Right ventricle myocardium inferior (tissue), 1 donor: ENCODE measurements at regions of chr2 and their contacts with region 1.

Region 1: DNA sequence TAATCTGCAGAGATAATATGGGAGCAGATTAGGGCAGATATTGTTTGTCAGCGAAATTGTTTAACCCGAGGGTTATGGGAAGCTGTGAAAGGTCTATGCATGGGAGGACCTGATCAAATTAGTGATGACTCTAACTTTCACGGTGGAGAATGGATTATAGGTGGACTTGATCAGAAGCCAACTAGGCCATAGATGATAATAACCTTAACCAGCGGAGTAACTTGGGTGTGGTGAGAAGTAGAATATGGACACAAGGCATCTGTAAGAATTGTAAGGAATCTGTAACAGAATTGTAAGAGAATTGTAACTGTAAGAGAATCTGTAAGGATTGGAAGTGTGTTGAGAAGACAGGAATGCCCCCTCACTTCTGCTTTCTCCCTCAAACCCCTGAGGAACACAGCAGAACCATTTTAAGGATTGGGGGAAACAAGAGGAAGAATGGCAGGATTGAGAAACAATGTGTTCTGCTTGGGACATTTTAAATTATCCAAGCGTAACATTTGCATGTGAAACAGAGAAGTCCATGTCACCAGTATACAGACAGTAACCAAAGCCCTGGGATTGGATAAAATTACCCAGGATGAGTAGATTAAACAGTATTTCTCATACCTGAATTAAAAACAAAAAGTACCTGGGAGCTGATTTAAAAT is 14.9 kb upstream of the SLC39A10 start:
- DNase-seq: no peak
- ATAC-seq: no peak

Region 2: GRCh38 chr2:195608768-195609454 is 33.2 kb before region 1 on chr2:
- intact Hi-C with region 1: loop called (anchors 5 kb)
- DNase-seq: no peak
- ATAC-seq: no peak

Region 3: DNA sequence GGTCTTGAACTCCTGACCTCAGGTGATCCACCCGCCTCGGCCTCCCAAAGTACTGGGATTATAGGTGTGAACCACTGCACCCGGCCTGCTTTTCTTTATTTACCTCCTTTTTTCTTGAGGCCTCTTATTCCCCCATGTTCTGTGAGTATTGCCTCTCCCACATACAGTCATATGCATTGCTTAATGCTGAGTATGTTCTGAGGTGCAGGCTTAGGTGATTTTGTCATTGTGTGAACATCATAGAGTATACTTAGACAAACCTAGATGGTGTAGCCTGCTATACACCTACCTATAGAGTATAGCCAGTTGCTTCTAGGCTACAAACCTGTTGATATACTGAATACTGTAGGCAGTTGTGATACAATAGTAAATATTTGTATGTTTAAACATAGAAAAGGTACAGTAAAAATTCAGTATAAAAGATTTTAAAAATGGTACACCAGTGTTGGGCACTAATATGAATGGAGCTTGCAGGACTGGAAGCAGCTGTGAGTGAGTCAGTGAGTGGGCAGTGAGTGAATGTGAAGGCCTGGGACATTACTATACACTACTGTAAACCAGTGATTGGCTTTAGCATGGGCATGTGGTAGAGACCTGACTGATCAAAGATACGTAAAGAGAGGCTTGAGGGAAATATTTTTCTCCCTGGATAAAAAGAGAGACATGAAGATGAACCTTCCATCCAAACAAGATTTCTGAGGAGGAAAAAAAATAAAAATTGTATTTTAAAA is 32.5 kb after region 1 on chr2:
- intact Hi-C with region 1: no loop called
- DNase-seq: no peak
- ATAC-seq: no peak